ENCODE measurements at regions of chr12 and their contacts with region 1.

Region 1: DNA sequence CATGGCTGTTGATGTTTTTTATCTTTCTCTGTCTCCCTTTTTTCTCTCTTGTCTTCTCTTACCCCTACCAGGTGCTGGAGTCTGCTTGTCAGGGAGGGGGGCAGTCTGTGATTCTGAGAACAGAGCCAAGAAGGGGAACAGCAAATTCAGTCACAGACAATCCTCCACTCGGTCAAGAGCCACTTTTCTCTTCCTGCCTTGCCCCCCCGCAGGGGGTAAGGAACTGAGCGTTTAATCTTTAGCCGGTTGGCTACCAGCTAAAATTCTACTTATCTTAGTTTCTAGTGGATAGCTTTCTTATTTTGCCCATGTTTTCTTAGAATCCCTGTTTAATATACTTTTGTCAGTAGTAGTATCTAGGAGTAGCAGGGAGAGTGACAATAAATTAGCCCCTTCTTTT is 1.9 kb downstream of the RIMKLB start:
- DNase-seq: no peak
- H3K4me3 ChIP-seq: peak overlapping the region in 3 of 4 donors; percentile 9 to 100 (median 94)
- H3K27ac ChIP-seq: peak overlapping the region; percentile 36 to 98 (median 70)
- H3K4me1 ChIP-seq: peaks cover 21 to 63% (median 60%) of the 10 kb centered on the region in 4 donors
- H3K27me3 ChIP-seq: no peaks in the 10 kb centered on the region
- CTCF ChIP-seq: no peak
- EP300 ChIP-seq: no peak
- POLR2A ChIP-seq: no peak

Region 2: DNA sequence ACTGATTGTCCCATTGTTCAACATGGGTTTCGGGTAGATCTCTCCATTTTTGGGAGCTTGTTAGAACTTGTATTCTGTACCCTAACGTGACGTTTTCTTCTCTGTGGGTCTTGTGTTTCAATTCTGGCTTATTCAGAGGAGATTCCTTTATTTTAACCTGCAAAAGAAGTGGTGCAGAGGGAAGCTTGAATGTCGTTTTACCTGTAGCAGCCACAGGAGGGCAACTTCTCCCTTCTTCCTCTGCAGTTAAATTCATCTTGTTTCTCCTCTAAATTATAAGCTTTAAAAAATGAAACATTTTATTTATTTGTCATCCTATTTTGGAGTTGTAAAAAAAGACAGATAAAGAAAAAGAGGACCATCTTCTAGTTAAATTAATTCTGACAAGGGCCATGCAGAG is 200.1 kb before region 1 on chr12:
- intact Hi-C with region 1: no loop called
- DNase-seq: no peak
- H3K4me3 ChIP-seq: no peak overlapping the region
- H3K27ac ChIP-seq: no peak overlapping the region
- H3K4me1 ChIP-seq: no peaks in the 10 kb centered on the region
- H3K27me3 ChIP-seq: no peaks in the 10 kb centered on the region
- CTCF ChIP-seq: no peak
- EP300 ChIP-seq: no peak
- POLR2A ChIP-seq: no peak

Region 3: DNA sequence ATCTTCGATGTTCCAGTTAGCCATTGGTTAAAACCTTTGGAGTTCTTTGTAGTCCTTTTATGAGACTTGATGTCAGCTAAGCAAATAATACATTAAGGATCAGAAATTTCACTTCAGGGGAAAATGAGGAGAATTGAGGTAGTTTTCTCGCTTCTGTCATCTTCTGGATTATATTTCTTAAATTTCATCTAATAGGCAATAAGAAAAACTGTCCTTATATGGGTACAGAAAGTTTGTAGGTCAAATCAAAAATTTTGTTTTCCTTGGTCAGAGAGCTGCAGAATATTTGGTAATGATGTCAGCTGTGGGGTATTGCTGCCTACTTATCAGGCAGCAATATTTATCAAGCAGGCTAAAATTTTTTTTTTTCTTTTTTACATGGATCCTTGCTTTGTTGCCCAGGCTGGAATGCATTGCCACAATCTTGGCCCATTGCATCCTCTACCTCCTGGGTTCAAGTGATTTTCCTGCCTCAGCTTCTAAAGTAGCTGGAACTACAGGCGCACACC is 35.2 kb after region 1 on chr12:
- intact Hi-C with region 1: loop called (anchors 5 kb)
- DNase-seq: peak; percentile 37
- H3K4me3 ChIP-seq: no peak overlapping the region
- H3K27ac ChIP-seq: peak overlapping the region; percentile 40 to 60 (median 53)
- H3K4me1 ChIP-seq: peaks cover 16 to 42% (median 34%) of the 10 kb centered on the region in 4 donors
- H3K27me3 ChIP-seq: no peaks in the 10 kb centered on the region
- CTCF ChIP-seq: no peak
- EP300 ChIP-seq: no peak
- POLR2A ChIP-seq: no peak

Region 4: GRCh38 chr12:8887285-8887715 is 187.6 kb after region 1 on chr12:
- intact Hi-C with region 1: no loop called
- DNase-seq: no peak
- H3K4me3 ChIP-seq: no peak overlapping the region
- H3K27ac ChIP-seq: no peak overlapping the region
- H3K4me1 ChIP-seq: peaks cover 0 to 3% (median 0%) of the 10 kb centered on the region in 4 donors
- H3K27me3 ChIP-seq: no peaks in the 10 kb centered on the region
- CTCF ChIP-seq: no peak
- EP300 ChIP-seq: no peak
- POLR2A ChIP-seq: no peak